Aorta (tissue), 5 donors: ENCODE measurements at regions of chr5 and their contacts with region 1.

Region 1: GRCh38 chr5:157366741-157367674 is 93.0 kb upstream of the NIPAL4 start:
- DNase-seq: peak in 1 of 2 donors; percentile 61
- ATAC-seq: peak; percentile 84
- H3K4me3 ChIP-seq: no peak overlapping the region
- H3K27ac ChIP-seq: peak overlapping the region in 1 of 2 donors; percentile 52
- H3K4me1 ChIP-seq: peaks cover 4 to 7% of the 10 kb centered on the region in 2 donors
- H3K27me3 ChIP-seq: no peaks in the 10 kb centered on the region

Region 2: DNA sequence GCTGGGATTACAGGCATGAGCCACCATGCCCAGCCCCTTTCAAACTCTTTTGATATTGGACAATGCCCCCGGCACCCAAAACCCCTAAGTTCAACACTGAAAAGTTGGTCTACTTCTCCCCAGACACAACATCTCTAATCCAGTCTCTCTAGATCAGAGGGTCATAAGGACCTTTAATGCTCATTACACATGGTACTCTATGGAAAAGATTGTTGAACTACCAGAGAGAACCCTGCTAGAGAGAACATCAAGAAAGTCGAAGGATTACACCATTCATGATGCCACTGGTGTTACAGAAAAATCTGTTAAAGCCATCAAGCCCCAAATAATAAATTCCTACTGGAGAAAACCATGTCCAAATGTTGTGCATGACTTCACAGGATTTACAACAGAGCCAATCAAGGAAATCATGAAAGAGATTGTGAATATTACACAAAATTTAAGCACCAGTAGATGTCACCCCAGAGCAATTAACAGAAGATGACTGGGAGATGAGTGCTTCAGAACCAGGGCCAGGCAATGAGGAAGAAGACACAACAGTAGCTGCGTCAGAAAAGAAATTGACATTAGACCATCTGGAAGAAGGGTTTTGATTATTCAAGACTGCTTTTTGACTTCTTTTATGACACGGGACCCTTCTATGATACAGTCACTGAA is 64.7 kb after region 1 on chr5:
- intact Hi-C with region 1: loop called in 1 of 2 experiments (anchors 5 kb)
- DNase-seq: no peak
- ATAC-seq: peak; percentile 78
- H3K4me3 ChIP-seq: no peak overlapping the region
- H3K27ac ChIP-seq: no peak overlapping the region
- H3K4me1 ChIP-seq: no peaks in the 10 kb centered on the region
- H3K27me3 ChIP-seq: no peaks in the 10 kb centered on the region

Region 3: DNA sequence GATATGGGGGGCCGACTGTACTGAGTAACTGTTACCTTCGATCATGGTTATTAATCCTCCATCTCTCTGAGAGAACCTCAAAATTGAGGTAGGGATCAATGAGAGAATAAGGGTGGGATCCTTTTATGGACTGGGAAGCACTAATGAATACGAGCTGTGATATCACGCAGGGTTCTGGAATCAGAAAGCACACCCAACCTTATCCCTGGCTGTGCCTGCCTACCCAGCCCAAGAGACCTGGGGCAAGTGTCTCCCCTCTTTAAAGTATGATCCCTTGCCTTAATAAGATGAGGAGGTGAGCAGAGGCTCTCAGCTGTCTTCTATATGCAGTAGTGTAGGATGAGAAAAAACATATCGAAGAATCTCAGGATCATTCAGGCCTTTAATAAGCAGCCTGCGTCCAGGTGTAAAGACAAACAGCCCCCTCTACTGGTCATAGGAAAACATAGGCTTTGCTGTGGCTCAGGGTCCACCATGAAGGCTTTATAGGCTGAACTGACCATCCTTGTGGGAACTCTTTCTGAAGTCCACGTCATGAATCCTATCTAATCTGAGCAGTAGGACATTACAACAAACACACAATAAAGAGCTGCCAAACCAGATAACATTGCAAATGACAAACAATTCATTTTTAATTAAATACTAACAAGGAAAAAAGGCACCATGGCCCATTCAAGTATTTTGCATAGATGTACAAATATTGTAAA is 109.8 kb after region 1 on chr5:
- intact Hi-C with region 1: loop called (anchors 2 kb)
- DNase-seq: peak in 1 of 2 donors; percentile 4
- ATAC-seq: peak; percentile 69
- H3K4me3 ChIP-seq: no peak overlapping the region
- H3K27ac ChIP-seq: no peak overlapping the region
- H3K4me1 ChIP-seq: no peaks in the 10 kb centered on the region
- H3K27me3 ChIP-seq: no peaks in the 10 kb centered on the region

Region 4: GRCh38 chr5:157718519-157718918 is 351.5 kb after region 1 on chr5:
- intact Hi-C with region 1: loop called (anchors 2 to 5 kb)
- DNase-seq: no peak
- ATAC-seq: peak; percentile 89
- H3K4me3 ChIP-seq: no peak overlapping the region
- H3K27ac ChIP-seq: no peak overlapping the region
- H3K4me1 ChIP-seq: no peaks in the 10 kb centered on the region
- H3K27me3 ChIP-seq: no peaks in the 10 kb centered on the region

Region 5: DNA sequence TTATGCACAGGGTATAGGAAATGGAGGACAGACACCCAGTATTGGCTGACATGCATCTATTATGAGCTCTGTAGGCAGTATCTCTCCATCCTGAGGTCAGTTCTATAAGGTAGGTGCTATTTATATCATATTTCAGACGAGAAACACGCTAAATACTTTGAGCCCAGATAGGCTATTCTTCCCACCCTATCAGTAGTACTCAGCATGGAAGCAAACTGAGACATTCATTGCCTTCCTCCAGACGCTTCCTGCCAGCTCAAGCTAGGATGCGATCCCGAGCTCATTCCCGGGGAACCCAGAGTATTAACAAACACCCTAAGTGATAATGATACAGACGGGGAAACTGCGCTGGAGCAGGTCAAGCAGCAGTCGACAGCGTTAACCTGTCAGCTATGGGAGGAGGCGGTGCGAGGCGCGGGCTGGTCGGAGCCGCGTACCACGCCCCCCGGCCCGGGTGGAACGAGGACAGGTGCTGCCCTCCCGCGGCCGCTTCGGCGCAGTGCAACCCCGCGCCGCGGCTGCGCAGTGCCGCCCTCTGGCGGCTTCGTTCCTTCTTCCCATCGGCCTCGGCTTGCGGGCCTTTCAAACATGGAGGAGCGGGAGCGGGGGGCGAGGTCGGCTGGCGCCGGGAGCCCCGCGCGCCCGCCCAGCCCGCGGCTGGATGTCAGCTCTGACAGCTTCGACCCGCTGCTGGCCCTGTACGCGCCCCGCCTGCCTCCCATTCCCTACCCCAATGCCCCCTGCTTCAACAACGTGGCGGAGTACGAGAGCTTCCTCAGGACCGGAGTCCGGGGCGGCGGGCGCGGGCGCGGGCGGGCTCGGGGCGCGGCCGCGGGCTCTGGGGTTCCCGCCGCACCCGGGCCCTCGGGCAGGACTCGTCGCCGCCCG is 376.4 kb after region 1 on chr5 and contains the start of gene LSM11:
- intact Hi-C with region 1: loop called in 1 of 2 experiments (anchors 10 kb)
- DNase-seq: peak; percentile 91 to 97
- ATAC-seq: peak; percentile 98
- H3K4me3 ChIP-seq: peak within 1 kb of the TSS; percentile 83 to 95
- H3K27ac ChIP-seq: no peak within 1 kb of the TSS
- H3K4me1 ChIP-seq: peaks cover 0 to 1% of the 10 kb centered on the region in 2 donors
- H3K27me3 ChIP-seq: no peaks in the 10 kb centered on the region
- total RNA-seq, gene LSM11: 5.2 to 5.9 TPM